CD4-positive, alpha-beta memory T cell (primary cell): ENCODE measurements at regions of chrX and their contacts with region 1.

Region 1: GRCh38 chrX:40013266-40014195 is 84.2 kb downstream of the BCOR start:
- DNase-seq: peak in 2 of 5 donors; percentile 28 to 31
- H3K4me3 ChIP-seq: peak overlapping the region in 1 of 2 donors; percentile 49
- H3K4me3 Mint-ChIP-seq: peak overlapping the region; percentile 64 to 84 (median 78)
- H3K27ac ChIP-seq: no peak overlapping the region
- H3K27ac Mint-ChIP-seq: peak overlapping the region in 2 of 7 donors; percentile 40 to 60
- H3K4me1 ChIP-seq: peaks cover 22% of the 10 kb centered on the region
- H3K4me1 Mint-ChIP-seq: peaks cover 4 to 26% (median 16%) of the 10 kb centered on the region in 4 donors
- H3K27me3 ChIP-seq: no peaks in the 10 kb centered on the region
- H3K27me3 Mint-ChIP-seq: peaks cover 3 to 5% of the 10 kb centered on the region in 2 donors

Region 2: GRCh38 chrX:40108959-40109287 is 95.4 kb after region 1 on chrX:
- CTCF ChIA-PET with region 1: no interaction called
- POLR2A ChIA-PET with region 1: no interaction called
- intact Hi-C with region 1: loop called (anchors 5 kb)
- DNase-seq: peak; percentile 57 to 72 (median 60)
- H3K4me3 ChIP-seq: peak overlapping the region in 1 of 2 donors; percentile 19
- H3K4me3 Mint-ChIP-seq: peak overlapping the region in 4 of 8 donors; percentile 60 to 75 (median 66)
- H3K27ac ChIP-seq: no peak overlapping the region
- H3K27ac Mint-ChIP-seq: no peak overlapping the region
- H3K4me1 ChIP-seq: peaks cover 20% of the 10 kb centered on the region
- H3K4me1 Mint-ChIP-seq: peaks cover 3 to 18% (median 12%) of the 10 kb centered on the region in 4 donors
- H3K27me3 ChIP-seq: no peaks in the 10 kb centered on the region
- H3K27me3 Mint-ChIP-seq: no peaks in the 10 kb centered on the region